ENCODE measurements at regions of chr1 and their contacts with region 1.

Region 1: GRCh38 chr1:51192213-51192843 is 43.7 kb upstream of the RNF11 start:
- DNase-seq: peak; percentile 63
- H3K4me3 ChIP-seq: no peak overlapping the region
- H3K27ac ChIP-seq: no peak overlapping the region
- H3K4me1 ChIP-seq: no peaks in the 10 kb centered on the region
- H3K27me3 ChIP-seq: no peaks in the 10 kb centered on the region
- CTCF ChIP-seq: peak; percentile 62 to 91 (median 81)
- EP300 ChIP-seq: no peak
- POLR2A ChIP-seq: no peak

Region 2: DNA sequence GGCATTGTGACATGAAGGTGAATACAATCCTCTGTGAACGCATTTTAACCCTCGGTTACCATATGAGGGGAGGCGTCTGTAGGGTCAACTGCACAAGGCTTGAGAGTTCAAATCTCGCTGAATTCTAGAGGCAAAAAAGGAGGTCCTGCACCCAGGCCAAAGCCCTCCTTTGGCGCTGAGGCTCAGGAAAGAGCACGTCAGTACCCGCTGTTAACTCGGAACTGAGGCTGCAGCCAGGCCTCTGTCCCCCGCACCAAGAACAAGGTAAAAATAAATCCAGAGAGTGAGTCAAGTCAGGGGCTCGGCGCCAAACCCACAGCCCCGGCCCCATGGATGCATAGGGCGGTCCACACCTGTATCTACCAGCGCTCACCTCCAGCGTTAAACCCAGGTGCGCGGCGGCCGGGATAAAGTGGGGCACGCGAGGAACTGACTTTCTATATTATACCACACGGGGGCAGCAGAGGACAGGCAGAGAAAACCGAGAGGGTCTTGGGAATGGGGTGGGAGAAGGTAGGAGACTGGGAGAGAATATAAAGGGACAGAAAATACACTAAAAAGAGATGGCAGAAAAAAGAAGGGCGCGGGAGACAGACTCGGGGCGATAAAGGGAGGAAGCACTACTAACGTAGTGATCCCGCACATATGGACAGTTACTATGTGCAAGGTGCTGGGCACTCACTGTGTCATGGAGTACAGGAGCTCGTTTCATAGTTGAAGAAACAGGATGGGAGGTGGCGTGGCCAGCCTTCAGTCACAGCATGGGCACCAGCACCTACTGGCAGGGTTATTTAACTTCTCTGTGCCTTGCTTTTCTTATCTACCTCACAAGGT is 823.9 kb before region 1 on chr1:
- in situ Hi-C with region 1: loop called in 1 of 4 experiments (anchors 25 kb)
- intact Hi-C with region 1: no loop called
- DNase-seq: peak; percentile 35
- H3K4me3 ChIP-seq: no peak overlapping the region
- H3K27ac ChIP-seq: no peak overlapping the region
- H3K4me1 ChIP-seq: peaks cover 0 to 7% (median 2%) of the 10 kb centered on the region in 4 donors
- H3K27me3 ChIP-seq: peaks cover 51% of the 10 kb centered on the region
- CTCF ChIP-seq: peak; percentile 58 to 83 (median 72)
- EP300 ChIP-seq: no peak
- POLR2A ChIP-seq: no peak

Region 3: DNA sequence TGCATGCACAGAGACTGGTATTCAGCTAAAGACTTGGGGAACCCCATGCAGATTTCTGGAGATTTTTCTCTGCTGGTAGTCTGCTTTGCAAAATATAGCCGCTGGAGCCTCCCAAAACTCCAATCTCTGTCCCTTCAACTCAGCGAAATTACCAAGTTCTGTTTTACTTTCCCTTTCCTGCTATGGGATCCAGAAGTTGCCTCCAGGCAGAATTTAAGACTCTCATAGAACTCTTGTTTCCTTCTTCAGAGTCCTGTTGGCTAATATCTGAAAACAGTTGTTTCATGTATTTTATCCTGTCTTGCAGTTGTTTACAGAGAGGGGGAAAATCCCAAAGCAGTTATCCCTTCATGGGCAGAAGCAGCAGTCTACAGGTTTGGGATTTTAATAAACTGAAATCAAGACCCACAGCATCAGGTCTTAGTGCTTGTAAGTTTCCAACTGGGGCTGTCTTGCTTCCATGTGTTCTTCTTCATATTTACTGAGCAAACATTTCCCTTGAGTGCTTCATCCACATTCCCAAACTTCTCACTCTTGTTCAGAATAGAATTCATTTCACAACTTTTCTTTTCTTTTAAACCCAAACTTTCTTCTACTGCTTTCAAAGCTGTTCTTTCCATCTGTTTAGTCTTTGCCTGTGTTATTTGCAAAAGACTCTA is 547.8 kb before region 1 on chr1:
- in situ Hi-C with region 1: no loop called
- intact Hi-C with region 1: no loop called
- DNase-seq: no peak
- H3K4me3 ChIP-seq: peak overlapping the region in 1 of 4 donors; percentile 18
- H3K27ac ChIP-seq: peak overlapping the region; percentile 11 to 49 (median 35)
- H3K4me1 ChIP-seq: peaks cover 0 to 20% (median 7%) of the 10 kb centered on the region in 4 donors
- H3K27me3 ChIP-seq: no peaks in the 10 kb centered on the region
- CTCF ChIP-seq: no peak
- EP300 ChIP-seq: no peak
- POLR2A ChIP-seq: no peak

Region 4: DNA sequence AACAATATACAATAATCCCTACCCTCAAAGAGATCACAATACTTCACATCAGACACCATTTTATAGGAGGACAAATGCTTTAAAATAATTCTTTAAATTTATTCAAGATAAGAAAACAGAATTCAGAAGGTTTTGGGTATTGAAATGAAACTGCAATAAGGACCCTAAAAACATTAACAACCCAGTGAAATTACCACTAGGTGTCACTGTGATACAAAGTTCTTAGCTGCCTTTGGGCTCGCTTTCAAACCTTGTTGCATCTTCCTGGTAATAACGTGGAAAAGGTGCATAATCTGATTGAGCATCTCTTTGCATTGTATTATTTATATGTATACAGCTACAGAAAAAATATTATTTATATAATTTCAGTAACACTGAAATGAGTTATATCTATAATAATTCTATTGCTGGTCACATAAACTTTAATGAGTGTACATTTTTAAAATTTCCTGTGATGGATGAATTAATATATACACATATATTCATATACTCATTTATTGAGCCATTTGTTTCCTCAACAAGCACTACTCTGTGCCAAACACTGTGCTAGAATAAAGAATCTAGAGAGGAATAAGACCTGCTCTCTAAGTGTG is 417.5 kb before region 1 on chr1:
- in situ Hi-C with region 1: loop called (anchors 5 to 10 kb)
- intact Hi-C with region 1: loop called (anchors 5 kb)
- DNase-seq: no peak
- H3K4me3 ChIP-seq: no peak overlapping the region
- H3K27ac ChIP-seq: peak overlapping the region in 1 of 4 donors; percentile 6
- H3K4me1 ChIP-seq: peaks cover 0 to 21% (median 0%) of the 10 kb centered on the region in 4 donors
- H3K27me3 ChIP-seq: no peaks in the 10 kb centered on the region
- CTCF ChIP-seq: peak; percentile 56 to 73 (median 69)
- EP300 ChIP-seq: no peak
- POLR2A ChIP-seq: no peak

Region 5: DNA sequence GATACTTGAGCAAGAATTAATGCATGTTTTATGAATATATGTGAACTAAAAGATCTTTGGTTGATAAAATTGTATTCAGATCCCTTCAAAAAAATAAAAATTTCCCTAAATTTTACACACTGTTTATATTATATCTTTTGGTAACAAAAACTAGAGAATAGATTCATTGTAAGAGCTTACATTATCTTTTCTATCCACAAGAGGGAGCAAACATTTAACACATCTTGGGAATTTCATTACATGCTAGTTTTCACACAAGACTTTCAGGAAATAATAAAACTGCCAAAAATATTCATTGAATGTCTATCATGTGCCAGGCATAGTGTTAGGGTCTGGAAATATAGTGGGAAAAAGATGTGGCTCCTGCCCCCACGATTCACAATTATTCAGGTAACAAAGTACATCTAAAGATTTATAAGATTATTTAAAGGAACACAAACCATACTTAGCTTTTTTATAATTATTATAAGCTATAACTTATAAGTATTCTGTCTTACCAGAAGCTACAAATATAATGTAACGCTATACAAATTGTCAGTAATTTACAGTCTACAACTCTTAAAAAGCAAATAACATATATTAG is 262.9 kb before region 1 on chr1:
- in situ Hi-C with region 1: loop called (anchors 10 to 25 kb)
- intact Hi-C with region 1: no loop called
- DNase-seq: no peak
- H3K4me3 ChIP-seq: no peak overlapping the region
- H3K27ac ChIP-seq: no peak overlapping the region
- H3K4me1 ChIP-seq: peaks cover 0 to 16% (median 7%) of the 10 kb centered on the region in 4 donors
- H3K27me3 ChIP-seq: no peaks in the 10 kb centered on the region
- CTCF ChIP-seq: peak; percentile 54 to 63 (median 57)
- EP300 ChIP-seq: no peak
- POLR2A ChIP-seq: no peak

Region 6: GRCh38 chr1:50978144-50978851 is 214.0 kb before region 1 on chr1:
- in situ Hi-C with region 1: no loop called
- intact Hi-C with region 1: no loop called
- DNase-seq: peak; percentile 70
- H3K4me3 ChIP-seq: peak overlapping the region; percentile 65 to 77 (median 75)
- H3K27ac ChIP-seq: peak overlapping the region; percentile 88 to 95 (median 94)
- H3K4me1 ChIP-seq: peaks cover 0 to 22% (median 5%) of the 10 kb centered on the region in 4 donors
- H3K27me3 ChIP-seq: no peaks in the 10 kb centered on the region
- CTCF ChIP-seq: no peak
- EP300 ChIP-seq: no peak
- POLR2A ChIP-seq: peak; percentile 43

Region 7: DNA sequence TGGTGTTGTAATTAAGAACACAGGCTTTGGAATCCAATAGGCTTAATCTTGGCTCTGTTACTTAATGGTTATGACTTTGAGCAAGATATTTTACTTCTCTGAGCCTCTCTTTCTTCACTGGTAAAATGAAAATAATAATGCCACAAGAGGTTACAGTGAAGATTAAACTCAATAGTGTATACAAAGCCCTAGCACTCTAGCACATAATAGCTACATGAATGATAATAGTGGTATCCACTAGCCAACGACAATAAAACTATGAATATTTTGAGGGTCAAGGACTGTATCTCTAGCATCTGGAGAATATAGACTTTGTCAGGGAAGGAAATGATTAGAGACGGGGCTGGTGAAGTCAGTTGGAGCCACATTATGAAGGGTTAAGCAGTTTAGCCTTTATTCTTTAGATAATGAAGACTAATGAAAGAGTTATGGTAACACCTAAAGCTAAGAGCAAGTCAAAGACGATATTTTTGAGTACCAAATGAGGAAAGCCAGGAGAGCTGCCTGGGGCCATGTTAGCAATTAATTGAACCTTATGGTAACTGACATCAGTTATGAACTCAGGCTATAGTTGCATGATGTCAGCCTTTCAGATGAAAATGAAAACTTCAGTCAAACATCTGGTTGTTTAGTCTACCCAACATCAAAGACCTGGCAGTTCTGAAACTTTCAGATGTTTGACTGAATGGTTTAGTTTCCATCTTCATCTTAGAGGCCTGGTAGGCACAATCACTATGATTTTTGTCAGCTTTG is 11.0 kb after region 1 on chr1:
- in situ Hi-C with region 1: no loop called
- intact Hi-C with region 1: no loop called
- DNase-seq: no peak
- H3K4me3 ChIP-seq: no peak overlapping the region
- H3K27ac ChIP-seq: no peak overlapping the region
- H3K4me1 ChIP-seq: no peaks in the 10 kb centered on the region
- H3K27me3 ChIP-seq: no peaks in the 10 kb centered on the region
- CTCF ChIP-seq: no peak
- EP300 ChIP-seq: no peak
- POLR2A ChIP-seq: no peak

Region 8: GRCh38 chr1:51296383-51297357 is 104.3 kb after region 1 on chr1:
- in situ Hi-C with region 1: loop called in 1 of 4 experiments (anchors 10 kb)
- intact Hi-C with region 1: loop called (anchors 10 kb)
- DNase-seq: peak; percentile 88
- H3K4me3 ChIP-seq: peak overlapping the region; percentile 7 to 42 (median 26)
- H3K27ac ChIP-seq: peak overlapping the region in 1 of 4 donors; percentile 43
- H3K4me1 ChIP-seq: peaks cover 10 to 13% (median 11%) of the 10 kb centered on the region in 4 donors
- H3K27me3 ChIP-seq: no peaks in the 10 kb centered on the region
- CTCF ChIP-seq: peak; percentile 94 to 98 (median 97)
- EP300 ChIP-seq: no peak
- POLR2A ChIP-seq: no peak